ENCODE measurements at regions of chr1 and their contacts with region 1.

Region 1: DNA sequence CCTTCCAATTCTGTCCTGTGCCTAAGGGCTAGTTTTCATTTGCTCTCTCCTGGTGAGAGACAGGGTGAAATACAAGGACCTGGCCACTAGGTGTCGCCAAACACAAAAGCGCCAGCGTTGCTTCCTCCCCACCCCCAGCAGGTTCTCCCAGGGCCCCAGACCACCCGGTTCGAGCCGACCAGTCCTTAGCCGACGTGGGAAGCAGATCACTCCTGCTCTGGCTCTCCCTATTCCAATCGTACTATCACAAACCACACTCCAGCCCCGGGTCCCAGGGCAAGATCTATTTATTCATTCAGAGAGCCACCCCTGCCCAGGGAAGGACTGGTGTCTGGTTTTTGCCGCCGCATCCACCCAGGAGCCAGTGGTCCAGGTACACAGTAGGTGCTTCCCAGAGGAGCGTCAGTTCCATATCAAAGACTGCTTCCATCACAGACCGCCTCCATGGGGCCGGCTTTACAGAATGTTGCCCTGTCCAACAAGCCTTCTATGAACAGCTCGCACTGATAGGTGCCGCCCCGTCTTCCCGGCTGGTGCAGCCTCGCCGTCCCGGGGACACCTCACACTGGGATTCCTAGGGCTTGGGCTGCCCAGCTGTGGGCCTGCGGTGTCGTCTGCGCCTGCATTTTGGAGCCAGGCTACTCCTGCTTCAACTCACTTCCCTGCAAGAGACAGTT is 35.0 kb downstream of the CTNNBIP1 start:
- DNase-seq: peak; percentile 49
- H3K4me3 ChIP-seq: no peak overlapping the region
- H3K27ac ChIP-seq: no peak overlapping the region
- H3K4me1 ChIP-seq: peaks cover 35% of the 10 kb centered on the region
- H3K27me3 ChIP-seq: no peaks in the 10 kb centered on the region
- CTCF ChIP-seq: peak; percentile 79 to 97

Region 2: GRCh38 chr1:9561429-9561828 is 313.7 kb before region 1 on chr1:
- CTCF ChIA-PET with region 1: no interaction called
- dilution Hi-C with region 1: no loop called
- in situ Hi-C with region 1: no loop called
- intact Hi-C with region 1: no loop called
- DNase-seq: peak; percentile 80
- H3K4me3 ChIP-seq: no peak overlapping the region
- H3K27ac ChIP-seq: peak overlapping the region; percentile 29
- H3K4me1 ChIP-seq: peaks cover 4% of the 10 kb centered on the region
- H3K27me3 ChIP-seq: no peaks in the 10 kb centered on the region
- CTCF ChIP-seq: no peak

Region 3: DNA sequence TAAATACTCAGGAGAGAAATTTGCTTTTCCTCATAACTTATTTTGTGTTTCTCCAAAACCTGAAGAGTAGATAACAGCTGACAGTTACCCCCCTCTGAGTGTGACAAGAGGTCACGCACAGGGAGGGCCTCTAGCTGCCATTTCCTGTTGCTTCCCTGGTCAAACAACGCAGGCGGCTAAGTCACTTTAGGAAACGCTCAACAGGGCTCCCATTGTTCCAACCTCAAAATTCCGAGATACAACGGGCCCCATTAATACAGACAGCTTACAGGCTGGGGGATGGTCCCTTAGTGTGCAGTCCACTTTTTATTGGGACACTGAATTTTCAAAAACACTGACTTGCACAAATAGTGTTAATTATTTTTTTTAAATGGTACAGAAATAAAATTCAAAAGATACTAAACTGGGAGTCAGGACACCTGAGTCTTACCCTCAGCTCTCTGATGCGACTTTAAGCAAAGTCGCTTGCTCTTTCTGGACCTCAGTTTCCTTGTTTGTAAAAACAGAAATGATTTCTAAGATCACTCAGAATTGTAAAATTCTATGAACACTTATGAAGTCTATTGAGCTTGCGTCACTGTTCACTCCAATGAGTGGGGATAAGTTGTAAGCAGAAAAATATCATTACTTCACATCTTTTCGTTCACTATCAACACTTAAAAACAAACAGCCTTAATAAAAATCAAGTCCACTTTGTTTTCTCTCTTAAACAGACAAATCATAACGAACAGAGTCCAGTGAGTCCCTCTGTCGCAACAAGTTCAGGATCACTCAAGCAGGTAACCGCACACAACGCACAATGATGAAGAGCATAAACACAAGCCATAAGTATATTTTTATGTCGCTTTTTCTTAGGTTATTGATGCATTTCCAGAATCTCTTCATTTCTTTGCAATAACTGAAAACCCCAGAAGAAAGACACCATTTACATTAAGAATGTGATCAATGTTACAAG is 54.6 kb after region 1 on chr1:
- CTCF ChIA-PET with region 1: no interaction called
- dilution Hi-C with region 1: no loop called
- in situ Hi-C with region 1: loop called in 1 of 2 experiments (anchors 10 kb)
- intact Hi-C with region 1: no loop called
- DNase-seq: no peak
- H3K4me3 ChIP-seq: no peak overlapping the region
- H3K27ac ChIP-seq: no peak overlapping the region
- H3K4me1 ChIP-seq: no peaks in the 10 kb centered on the region
- H3K27me3 ChIP-seq: no peaks in the 10 kb centered on the region
- CTCF ChIP-seq: no peak

Region 4: GRCh38 chr1:9942939-9943788 is 68.1 kb after region 1 on chr1 and contains the starts of genes LZIC and NMNAT1:
- CTCF ChIA-PET with region 1: interaction called, 4 read pairs
- dilution Hi-C with region 1: no loop called
- in situ Hi-C with region 1: loop called in 1 of 2 experiments (anchors 10 kb)
- intact Hi-C with region 1: loop called (anchors 1 kb)
- DNase-seq: peak; percentile 95
- H3K4me3 ChIP-seq: peak within 1 kb of the TSS; percentile 66 to 77 (median 67)
- H3K27ac ChIP-seq: peak within 1 kb of the TSS; percentile 95
- H3K4me1 ChIP-seq: peaks cover 5% of the 10 kb centered on the region
- H3K27me3 ChIP-seq: no peaks in the 10 kb centered on the region
- CTCF ChIP-seq: no peak
- total RNA-seq, gene LZIC: 19.8 to 30.6 TPM
- total RNA-seq, gene NMNAT1: 9.7 to 11.1 TPM

Region 5: DNA sequence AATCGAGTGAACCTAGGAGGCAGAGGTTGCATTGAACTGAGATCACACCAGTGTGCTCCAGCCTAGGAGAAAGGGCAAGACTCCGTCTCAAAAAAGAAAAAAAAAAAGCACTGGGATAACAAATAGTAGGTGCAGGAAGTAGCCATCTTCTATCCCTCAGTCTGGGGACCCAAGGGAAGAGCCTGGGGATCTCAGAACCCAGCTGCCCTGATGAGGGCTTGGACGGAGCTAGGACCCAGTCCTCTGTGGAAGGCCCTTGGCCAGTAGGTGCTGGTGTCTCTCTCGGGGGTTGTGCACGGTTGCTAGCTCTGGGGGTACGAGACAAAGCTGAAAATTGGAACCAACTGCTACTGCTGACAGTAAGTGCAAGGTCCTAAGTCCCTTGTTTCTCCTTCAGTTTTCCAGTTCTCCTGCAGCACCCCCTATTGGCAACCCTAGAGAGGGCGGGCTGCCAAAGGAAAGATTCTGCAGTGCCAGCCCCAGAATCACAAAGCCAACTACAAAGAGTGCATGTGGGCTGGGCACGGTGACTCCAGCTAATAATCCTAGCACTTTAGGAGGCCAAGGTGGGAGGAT is 277.7 kb after region 1 on chr1:
- CTCF ChIA-PET with region 1: no interaction called
- dilution Hi-C with region 1: no loop called
- in situ Hi-C with region 1: no loop called
- intact Hi-C with region 1: loop called (anchors 2 kb)
- DNase-seq: peak; percentile 40
- H3K4me3 ChIP-seq: no peak overlapping the region
- H3K27ac ChIP-seq: no peak overlapping the region
- H3K4me1 ChIP-seq: no peaks in the 10 kb centered on the region
- H3K27me3 ChIP-seq: no peaks in the 10 kb centered on the region
- CTCF ChIP-seq: peak; percentile 71 to 81

Measured in mammary epithelial cell (primary cell).